Prostate gland (tissue), 2 donors: ENCODE measurements at regions of chr10 and their contacts with region 1.

Region 1: DNA sequence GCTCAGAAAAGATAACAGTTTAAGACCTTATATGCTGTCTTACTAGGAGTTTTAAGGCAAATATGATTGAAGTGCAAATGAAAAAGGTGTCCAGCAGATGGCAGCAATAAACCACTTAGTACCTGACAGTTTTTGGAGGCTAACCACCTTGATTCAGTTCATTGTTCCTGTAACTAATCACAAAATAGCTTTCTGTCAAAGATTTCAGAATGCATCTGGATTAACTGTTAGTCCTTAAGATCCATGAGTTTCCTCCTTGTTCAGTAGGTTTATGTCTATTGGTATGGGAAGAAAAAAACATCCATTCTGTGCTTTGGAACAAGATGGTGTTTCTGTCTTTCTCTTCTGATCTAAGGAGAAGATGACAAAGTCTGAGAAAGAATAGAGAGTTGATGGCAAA is 46.6 kb downstream of the CCSER2 start:
- DNase-seq: peak; percentile 59
- H3K4me3 ChIP-seq: no peak overlapping the region
- H3K27ac ChIP-seq: no peak overlapping the region
- H3K4me1 ChIP-seq: no peaks in the 10 kb centered on the region
- H3K27me3 ChIP-seq: no peaks in the 10 kb centered on the region
- CTCF ChIP-seq: peak; percentile 55 to 86 (median 84)
- POLR2A ChIP-seq: no peak

Region 2: GRCh38 chr10:84264611-84265141 is 110.3 kb before region 1 on chr10:
- intact Hi-C with region 1: loop called (anchors 5 kb)
- DNase-seq: peak; percentile 64
- H3K4me3 ChIP-seq: no peak overlapping the region
- H3K27ac ChIP-seq: no peak overlapping the region
- H3K4me1 ChIP-seq: no peaks in the 10 kb centered on the region
- H3K27me3 ChIP-seq: no peaks in the 10 kb centered on the region
- CTCF ChIP-seq: peak; percentile 73 to 84 (median 81)
- POLR2A ChIP-seq: no peak